Spleen (tissue), 13 donors: ENCODE measurements at regions of chr7 and their contacts with region 1.

Region 1: GRCh38 chr7:108525985-108526767 is at the start of gene PNPLA8:
- DNase-seq: peak; percentile 100
- H3K4me3 ChIP-seq: peak within 1 kb of the TSS; percentile 55 to 80 (median 67)
- H3K27ac ChIP-seq: peak within 1 kb of the TSS; percentile 98 to 100 (median 99)
- H3K4me1 ChIP-seq: peaks cover 21 to 51% (median 39%) of the 10 kb centered on the region in 6 donors
- H3K27me3 ChIP-seq: no peaks in the 10 kb centered on the region
- CTCF ChIP-seq: peak in 4 of 11 experiments; percentile 21 to 30 (median 26)
- POLR2A ChIP-seq: peak; percentile 78 to 95 (median 89)
- total RNA-seq, gene PNPLA8: 25.1 to 35.7 (median 31.6) TPM

Region 2: DNA sequence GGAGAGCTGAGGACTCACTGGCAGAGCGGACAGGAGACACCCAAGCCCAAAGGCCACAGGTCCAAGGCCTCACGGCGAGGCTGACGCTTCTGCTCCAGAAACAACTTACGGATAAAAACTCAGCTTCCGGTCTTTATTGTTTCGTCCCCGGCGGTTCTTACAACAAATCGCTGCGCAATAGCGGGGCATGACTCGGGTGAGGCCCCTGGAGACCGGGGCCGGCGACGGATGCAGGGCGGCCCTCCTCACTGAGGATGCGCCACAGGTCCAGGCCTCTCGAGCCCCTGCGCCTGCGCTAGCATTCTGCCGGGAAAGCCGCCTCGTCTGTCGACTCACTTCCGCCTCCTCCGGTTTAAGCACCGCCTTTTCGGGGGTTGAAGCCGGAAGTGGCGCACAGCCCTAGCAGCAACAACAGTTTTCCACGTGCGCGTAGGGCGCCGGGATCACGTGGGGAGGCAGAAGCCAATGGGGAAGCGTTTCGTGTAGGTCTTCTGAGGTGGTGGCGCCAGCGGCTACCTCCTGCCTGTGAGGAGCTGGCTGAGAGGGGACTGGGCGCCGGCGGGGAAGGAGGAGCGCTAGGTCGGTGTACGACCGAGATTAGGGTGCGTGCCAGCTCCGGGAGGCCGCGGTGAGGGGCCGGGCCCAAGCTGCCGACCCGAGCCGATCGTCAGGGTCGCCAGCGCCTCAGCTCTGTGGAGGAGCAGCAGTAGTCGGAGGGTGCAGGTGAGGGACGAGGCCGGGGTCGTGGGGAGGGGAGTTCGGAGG is 43.4 kb after region 1 on chr7 and contains the starts of genes DNAJB9 and THAP5:
- intact Hi-C with region 1: loop called (anchors 5 kb)
- DNase-seq: peak; percentile 100
- H3K4me3 ChIP-seq: peak within 1 kb of the TSS; percentile 63 to 88 (median 73)
- H3K27ac ChIP-seq: peak within 1 kb of the TSS; percentile 90 to 99 (median 98)
- H3K4me1 ChIP-seq: peaks cover 19 to 80% (median 58%) of the 10 kb centered on the region in 6 donors
- H3K27me3 ChIP-seq: no peaks in the 10 kb centered on the region
- CTCF ChIP-seq: peak in 6 of 11 experiments; percentile 18 to 36 (median 26)
- POLR2A ChIP-seq: peak; percentile 85 to 95 (median 94)
- total RNA-seq, gene DNAJB9: 14.1 to 79.2 (median 24.1) TPM
- total RNA-seq, gene THAP5: 25.3 to 44.1 (median 32.8) TPM

Region 3: DNA sequence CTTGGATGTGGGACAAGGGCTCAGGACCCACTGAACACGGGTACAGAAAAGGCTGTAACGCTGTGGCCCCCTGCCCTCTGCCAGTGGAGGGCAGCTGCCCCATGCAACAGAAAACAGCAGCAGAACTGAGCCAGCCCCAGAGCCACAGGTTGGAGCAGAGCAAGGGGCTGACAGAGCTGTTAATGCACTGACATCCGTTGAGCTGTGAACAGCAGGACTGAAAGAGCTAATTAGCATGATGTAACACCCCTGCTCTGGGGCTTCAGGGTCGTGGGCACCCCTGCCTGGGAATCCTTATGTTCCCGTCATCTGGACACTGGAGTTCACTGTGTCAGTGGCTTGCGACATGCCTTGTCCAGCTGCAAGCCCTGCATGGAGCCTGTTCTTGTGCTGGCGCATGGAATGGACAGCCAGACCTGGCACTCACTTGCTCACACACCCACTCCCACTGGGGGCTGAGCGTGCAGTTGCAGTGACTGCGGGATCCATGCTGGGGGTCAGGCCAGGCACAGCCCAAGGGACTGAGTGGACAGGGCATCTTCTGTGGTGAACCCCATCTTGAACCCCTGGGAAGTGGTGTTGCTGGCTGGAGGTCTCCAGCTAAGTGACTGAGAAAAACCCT is 337.2 kb after region 1 on chr7:
- intact Hi-C with region 1: no loop called
- DNase-seq: no peak
- H3K4me3 ChIP-seq: no peak overlapping the region
- H3K27ac ChIP-seq: no peak overlapping the region
- H3K4me1 ChIP-seq: no peaks in the 10 kb centered on the region
- H3K27me3 ChIP-seq: no peaks in the 10 kb centered on the region
- CTCF ChIP-seq: no peak
- POLR2A ChIP-seq: no peak